Activated naive CD4-positive, alpha-beta T cell treated with anti-CD3 and anti-CD28 coated beads for 36 hours (primary cell): ENCODE measurements at regions of chr2 and their contacts with region 1.

Region 1: GRCh38 chr2:110771547-110772382 is 39.4 kb downstream of the ACOXL start:
- DNase-seq: peak; percentile 21
- H3K4me3 Mint-ChIP-seq: no peak overlapping the region
- H3K27ac Mint-ChIP-seq: no peak overlapping the region
- H3K4me1 Mint-ChIP-seq: peaks cover 2% of the 10 kb centered on the region
- H3K27me3 Mint-ChIP-seq: peaks cover 22% of the 10 kb centered on the region

Region 2: DNA sequence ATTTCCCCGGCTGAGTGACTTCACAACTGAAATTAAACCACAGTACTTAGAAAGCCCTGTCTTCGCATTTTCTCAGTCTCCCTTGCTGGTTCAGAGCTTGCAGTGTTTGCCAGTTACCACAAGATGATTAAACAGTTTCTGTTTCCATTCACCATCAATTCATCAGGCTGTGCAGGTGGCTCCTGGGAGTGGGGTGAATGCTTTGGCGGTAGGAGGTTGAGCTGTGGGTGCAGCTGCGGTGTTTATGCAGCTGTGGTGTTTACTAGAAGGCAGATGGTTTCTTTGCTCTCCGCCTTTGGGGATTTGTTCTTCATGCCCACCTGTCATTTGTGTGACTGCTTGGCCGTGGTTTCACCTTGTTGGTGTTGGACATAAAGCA is 23.3 kb before region 1 on chr2:
- CTCF ChIA-PET with region 1: no interaction called
- intact Hi-C with region 1: loop called (anchors 1 kb)
- DNase-seq: peak; percentile 83
- H3K4me3 Mint-ChIP-seq: no peak overlapping the region
- H3K27ac Mint-ChIP-seq: no peak overlapping the region
- H3K4me1 Mint-ChIP-seq: peaks cover 17% of the 10 kb centered on the region
- H3K27me3 Mint-ChIP-seq: peaks cover 70% of the 10 kb centered on the region